ENCODE measurements at regions of chr17 and their contacts with region 1.

Region 1: DNA sequence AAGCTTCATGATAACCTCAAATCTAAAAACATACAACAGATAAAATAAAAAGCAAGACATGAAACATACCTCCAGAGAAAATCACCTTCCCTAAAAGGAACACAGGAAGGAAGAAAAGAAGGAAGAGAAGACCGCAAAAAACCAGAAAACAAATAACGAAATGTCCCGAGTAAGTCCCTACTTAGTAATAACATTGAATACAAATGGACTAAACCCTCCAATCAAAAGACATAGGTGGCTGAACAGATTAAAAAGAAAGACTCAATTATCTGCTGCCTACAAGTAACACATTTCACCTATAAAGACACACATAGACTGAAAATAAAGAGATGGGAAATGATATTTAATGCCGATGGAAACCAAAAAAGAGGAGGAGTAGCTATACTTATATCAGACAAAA is 6.2 kb downstream of the FBXO39 start:
- DNase-seq: no peak
- ATAC-seq: no peak
- H3K4me3 ChIP-seq: no peak overlapping the region
- H3K4me3 Mint-ChIP-seq: no peak overlapping the region
- H3K27ac ChIP-seq: no peak overlapping the region
- H3K27ac Mint-ChIP-seq: no peak overlapping the region
- H3K4me1 ChIP-seq: no peaks in the 10 kb centered on the region
- H3K4me1 Mint-ChIP-seq: no peaks in the 10 kb centered on the region
- H3K27me3 ChIP-seq: no peaks in the 10 kb centered on the region
- H3K27me3 Mint-ChIP-seq: peaks cover 71% of the 10 kb centered on the region
- CTCF ChIP-seq: no peak

Region 2: GRCh38 chr17:6567529-6568183 is 214.6 kb before region 1 on chr17:
- CTCF ChIA-PET with region 1: no interaction called
- POLR2A ChIA-PET with region 1: no interaction called
- intact Hi-C with region 1: no loop called
- DNase-seq: peak in 1 of 9 experiments; percentile 36
- ATAC-seq: no peak
- H3K4me3 ChIP-seq: no peak overlapping the region
- H3K4me3 Mint-ChIP-seq: no peak overlapping the region
- H3K27ac ChIP-seq: no peak overlapping the region
- H3K27ac Mint-ChIP-seq: no peak overlapping the region
- H3K4me1 ChIP-seq: no peaks in the 10 kb centered on the region
- H3K4me1 Mint-ChIP-seq: no peaks in the 10 kb centered on the region
- H3K27me3 ChIP-seq: peaks cover 3% of the 10 kb centered on the region in 2 experiments
- H3K27me3 Mint-ChIP-seq: peaks cover 9% of the 10 kb centered on the region
- CTCF ChIP-seq: no peak

Region 3: GRCh38 chr17:6772016-6772415 is 10.2 kb before region 1 on chr17:
- CTCF ChIA-PET with region 1: interaction called, 3 read pairs
- POLR2A ChIA-PET with region 1: no interaction called
- intact Hi-C with region 1: loop called in 1 of 2 experiments (anchors 1 kb)
- DNase-seq: no peak
- ATAC-seq: no peak
- H3K4me3 ChIP-seq: no peak overlapping the region
- H3K4me3 Mint-ChIP-seq: no peak overlapping the region
- H3K27ac ChIP-seq: no peak overlapping the region
- H3K27ac Mint-ChIP-seq: no peak overlapping the region
- H3K4me1 ChIP-seq: no peaks in the 10 kb centered on the region
- H3K4me1 Mint-ChIP-seq: peaks cover 6% of the 10 kb centered on the region
- H3K27me3 ChIP-seq: peaks cover 0 to 10% of the 10 kb centered on the region in 2 experiments
- H3K27me3 Mint-ChIP-seq: peaks cover 12% of the 10 kb centered on the region
- CTCF ChIP-seq: no peak

Region 4: GRCh38 chr17:6862822-6863221 is 80.6 kb after region 1 on chr17:
- CTCF ChIA-PET with region 1: no interaction called
- POLR2A ChIA-PET with region 1: no interaction called
- intact Hi-C with region 1: no loop called
- DNase-seq: peak in 4 of 9 experiments; percentile 10 to 64 (median 37)
- ATAC-seq: peak; percentile 59
- H3K4me3 ChIP-seq: no peak overlapping the region
- H3K4me3 Mint-ChIP-seq: no peak overlapping the region
- H3K27ac ChIP-seq: no peak overlapping the region
- H3K27ac Mint-ChIP-seq: no peak overlapping the region
- H3K4me1 ChIP-seq: peaks cover 5% of the 10 kb centered on the region
- H3K4me1 Mint-ChIP-seq: peaks cover 9% of the 10 kb centered on the region
- H3K27me3 ChIP-seq: no peaks in the 10 kb centered on the region
- H3K27me3 Mint-ChIP-seq: peaks cover 17% of the 10 kb centered on the region
- CTCF ChIP-seq: no peak

Measured in CD8-positive, alpha-beta T cell (primary cell).